AG04450 (cell line): ENCODE measurements at regions of chr2 and their contacts with region 1.

Region 1: GRCh38 chr2:169109502-169110409 is 40.4 kb downstream of the DHRS9 start:
- DNase-seq: peak; percentile 24
- H3K4me3 ChIP-seq: no peak overlapping the region
- H3K27ac ChIP-seq: no peak overlapping the region
- H3K27me3 ChIP-seq: no peaks in the 10 kb centered on the region
- CTCF ChIP-seq: peak; percentile 86

Region 2: DNA sequence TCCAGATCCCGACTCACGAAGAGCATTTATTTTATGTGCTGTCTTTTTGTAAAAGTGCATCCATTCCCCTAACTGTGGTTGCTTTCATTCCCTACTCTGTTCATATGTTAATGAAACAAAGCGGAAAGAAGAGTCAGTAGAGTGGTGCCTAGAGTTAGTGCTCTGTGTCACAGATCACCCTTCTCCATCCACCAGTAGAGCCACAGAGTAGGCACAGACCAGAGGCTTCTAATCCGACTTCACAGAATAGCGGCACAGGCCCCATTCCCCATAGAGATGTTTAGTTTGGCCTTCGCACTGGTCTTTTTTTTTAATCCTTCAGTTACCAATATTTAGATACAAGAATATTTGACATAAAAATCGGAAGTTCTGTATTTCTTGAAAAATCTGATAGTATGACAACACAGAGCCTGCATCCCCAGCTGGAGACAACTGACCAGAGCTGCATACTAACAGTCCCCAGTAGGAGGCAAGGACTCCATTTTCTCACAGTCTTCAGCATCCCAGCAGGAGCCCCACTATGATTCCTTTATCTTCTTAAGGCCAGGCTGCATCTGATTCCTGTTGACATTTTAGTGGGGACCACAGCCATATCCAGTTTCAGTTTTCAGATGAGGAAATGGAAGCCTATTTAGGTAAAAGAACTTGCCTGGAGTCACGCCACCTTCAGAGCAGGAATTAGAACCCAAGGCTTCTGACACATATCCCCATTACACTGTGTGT is 201.7 kb before region 1 on chr2:
- CTCF ChIA-PET with region 1: no interaction called
- POLR2A ChIA-PET with region 1: no interaction called
- DNase-seq: no peak
- H3K4me3 ChIP-seq: no peak overlapping the region
- H3K27ac ChIP-seq: no peak overlapping the region
- H3K27me3 ChIP-seq: peaks cover 3% of the 10 kb centered on the region
- CTCF ChIP-seq: no peak

Region 3: DNA sequence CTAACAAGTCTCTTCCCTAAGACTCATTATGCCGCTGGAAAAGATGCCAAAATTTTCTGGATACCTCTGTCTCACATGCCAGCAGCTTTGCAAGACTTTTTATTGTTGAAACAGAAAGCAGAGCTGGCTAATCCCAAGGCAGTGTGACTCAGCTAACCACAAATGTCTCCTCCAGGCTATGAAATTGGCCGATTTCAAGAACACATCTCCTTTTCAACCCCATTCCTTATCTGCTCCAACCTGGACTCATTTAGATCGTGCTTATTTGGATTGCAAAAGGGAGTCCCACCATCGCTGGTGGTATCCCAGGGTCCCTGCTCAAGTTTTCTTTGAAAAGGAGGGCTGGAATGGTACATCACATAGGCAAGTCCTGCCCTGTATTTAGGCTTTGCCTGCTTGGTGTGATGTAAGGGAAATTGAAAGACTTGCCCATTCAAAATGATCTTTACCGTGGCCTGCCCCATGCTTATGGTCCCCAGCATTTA is 14.1 kb before region 1 on chr2:
- CTCF ChIA-PET with region 1: interaction called, 14 read pairs
- POLR2A ChIA-PET with region 1: no interaction called
- DNase-seq: peak; percentile 21
- H3K4me3 ChIP-seq: no peak overlapping the region
- H3K27ac ChIP-seq: peak overlapping the region; percentile 3
- H3K27me3 ChIP-seq: no peaks in the 10 kb centered on the region
- CTCF ChIP-seq: no peak

Region 4: GRCh38 chr2:169131587-169132512 is 22.1 kb after region 1 on chr2:
- CTCF ChIA-PET with region 1: interaction called, 61 read pairs
- POLR2A ChIA-PET with region 1: no interaction called
- DNase-seq: no peak
- H3K4me3 ChIP-seq: no peak overlapping the region
- H3K27ac ChIP-seq: no peak overlapping the region
- H3K27me3 ChIP-seq: no peaks in the 10 kb centered on the region
- CTCF ChIP-seq: peak; percentile 79

Region 5: DNA sequence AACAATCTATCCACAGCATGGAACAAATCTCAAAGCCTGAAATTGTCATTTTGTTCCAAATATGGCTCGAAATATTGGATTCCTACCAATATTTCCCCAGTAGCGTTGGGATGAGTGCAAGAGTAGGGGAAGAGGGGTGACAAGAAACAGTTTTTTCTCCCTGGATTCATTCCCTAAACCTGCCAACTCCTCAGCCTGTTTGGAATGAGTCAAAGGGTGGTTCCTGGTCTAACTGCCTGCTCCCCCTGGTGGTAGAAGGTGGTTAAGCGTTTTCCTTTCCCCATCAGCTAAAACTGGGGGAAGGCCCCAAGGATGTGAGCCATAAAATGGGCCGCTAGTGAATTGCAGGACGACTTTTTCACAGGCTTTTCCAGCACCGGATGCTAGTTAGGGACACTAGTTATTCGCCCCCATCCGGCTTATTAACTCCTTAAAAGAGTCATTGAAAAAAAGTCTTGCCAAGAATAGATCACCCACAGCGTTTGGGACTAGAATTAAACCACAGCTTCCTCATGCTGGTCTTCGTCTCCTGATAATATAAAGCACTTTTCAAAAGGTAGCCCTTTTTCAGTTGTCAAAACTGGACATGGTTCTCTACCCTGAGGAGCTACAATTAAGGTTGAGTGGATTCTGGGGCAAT is 32.1 kb after region 1 on chr2:
- CTCF ChIA-PET with region 1: interaction called, 53 read pairs
- POLR2A ChIA-PET with region 1: interaction called, 5 read pairs
- DNase-seq: peak; percentile 7
- H3K4me3 ChIP-seq: no peak overlapping the region
- H3K27ac ChIP-seq: no peak overlapping the region
- H3K27me3 ChIP-seq: peaks cover 2% of the 10 kb centered on the region
- CTCF ChIP-seq: peak; percentile 89